ENCODE measurements at regions of chr21 and their contacts with region 1.

Region 1: DNA sequence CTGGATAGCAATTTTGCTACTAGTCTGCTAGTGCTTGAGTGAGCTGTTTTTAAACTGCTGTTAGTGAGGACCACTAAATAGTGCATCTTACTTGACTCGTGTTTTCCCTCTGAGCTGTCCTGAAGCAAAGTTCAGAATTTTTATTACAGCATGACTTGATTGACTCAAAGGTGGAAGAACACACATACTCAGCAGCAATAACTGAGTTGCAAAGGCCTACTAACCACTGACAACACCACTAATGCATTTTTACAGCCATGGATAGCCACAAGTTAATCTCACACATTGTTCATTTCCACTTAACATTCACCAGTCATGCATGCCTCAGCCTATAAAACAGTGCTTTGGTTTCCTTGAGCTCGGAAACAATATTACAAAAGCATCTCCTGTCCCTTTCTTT is 148.7 kb downstream of the RUNX1 start:
- DNase-seq: no peak
- ATAC-seq: no peak
- H3K4me3 ChIP-seq: no peak overlapping the region
- H3K4me3 Mint-ChIP-seq: no peak overlapping the region
- H3K27ac ChIP-seq: no peak overlapping the region
- H3K27ac Mint-ChIP-seq: peak overlapping the region; percentile 22
- H3K4me1 ChIP-seq: peaks cover 3% of the 10 kb centered on the region
- H3K4me1 Mint-ChIP-seq: peaks cover 32% of the 10 kb centered on the region
- H3K27me3 ChIP-seq: no peaks in the 10 kb centered on the region
- H3K27me3 Mint-ChIP-seq: no peaks in the 10 kb centered on the region
- CTCF ChIP-seq: no peak

Region 2: DNA sequence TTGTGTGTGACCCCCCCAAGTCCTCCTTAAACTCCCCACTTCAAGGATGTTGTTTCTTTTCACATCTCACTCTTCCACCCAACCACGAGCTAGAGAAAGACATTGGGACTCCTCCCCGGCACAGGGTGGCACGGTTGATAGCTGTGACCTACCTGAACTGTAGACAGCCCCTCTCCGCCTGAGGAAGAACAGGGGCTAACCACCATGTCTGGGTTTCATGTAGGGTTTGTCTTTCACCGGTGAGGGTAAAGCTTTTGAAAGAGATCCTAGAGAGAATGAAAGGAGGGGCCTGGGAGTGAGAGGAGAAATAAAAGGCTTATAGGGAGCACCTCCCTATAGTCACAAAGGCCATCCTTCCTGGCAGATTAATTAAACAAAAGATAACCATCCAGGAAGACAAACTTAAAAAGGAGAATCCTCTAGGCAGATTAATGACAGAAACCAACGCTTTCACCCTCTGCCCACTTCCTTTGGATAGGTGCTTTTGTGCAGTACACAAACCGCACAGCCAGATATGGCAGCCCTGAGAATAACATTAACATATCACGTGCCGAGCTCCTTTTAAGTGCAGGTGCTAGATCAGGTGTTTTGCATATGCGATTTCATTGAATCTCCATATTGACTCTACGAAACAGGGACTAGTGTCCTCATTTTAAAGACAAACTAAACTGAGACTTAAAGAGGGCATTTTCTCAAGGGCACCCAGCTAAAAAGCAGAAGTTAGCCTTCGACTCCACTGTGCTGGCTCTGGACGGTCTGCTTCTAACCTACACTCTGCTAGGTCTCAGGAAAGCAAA is 326.8 kb after region 1 on chr21:
- CTCF ChIA-PET with region 1: no interaction called
- POLR2A ChIA-PET with region 1: no interaction called
- intact Hi-C with region 1: loop called in 1 of 2 experiments (anchors 5 kb)
- DNase-seq: peak; percentile 18 to 84 (median 41)
- ATAC-seq: peak; percentile 87
- H3K4me3 ChIP-seq: peak overlapping the region; percentile 2 to 16
- H3K4me3 Mint-ChIP-seq: peak overlapping the region; percentile 67
- H3K27ac ChIP-seq: peak overlapping the region; percentile 48 to 71
- H3K27ac Mint-ChIP-seq: peak overlapping the region; percentile 95
- H3K4me1 ChIP-seq: peaks cover 38% of the 10 kb centered on the region
- H3K4me1 Mint-ChIP-seq: peaks cover 41% of the 10 kb centered on the region
- H3K27me3 ChIP-seq: no peaks in the 10 kb centered on the region
- H3K27me3 Mint-ChIP-seq: no peaks in the 10 kb centered on the region
- CTCF ChIP-seq: no peak

Measured in CD8-positive, alpha-beta T cell (primary cell).